Mammary epithelial cell (primary cell): ENCODE measurements at regions of chr14 and their contacts with region 1.

Region 1: GRCh38 chr14:80055667-80056496 is 155.4 kb downstream of the DIO2 start:
- DNase-seq: peak; percentile 32
- H3K4me3 ChIP-seq: no peak overlapping the region
- H3K27ac ChIP-seq: no peak overlapping the region
- H3K4me1 ChIP-seq: no peaks in the 10 kb centered on the region
- H3K27me3 ChIP-seq: no peaks in the 10 kb centered on the region
- CTCF ChIP-seq: peak; percentile 65 to 81

Region 2: DNA sequence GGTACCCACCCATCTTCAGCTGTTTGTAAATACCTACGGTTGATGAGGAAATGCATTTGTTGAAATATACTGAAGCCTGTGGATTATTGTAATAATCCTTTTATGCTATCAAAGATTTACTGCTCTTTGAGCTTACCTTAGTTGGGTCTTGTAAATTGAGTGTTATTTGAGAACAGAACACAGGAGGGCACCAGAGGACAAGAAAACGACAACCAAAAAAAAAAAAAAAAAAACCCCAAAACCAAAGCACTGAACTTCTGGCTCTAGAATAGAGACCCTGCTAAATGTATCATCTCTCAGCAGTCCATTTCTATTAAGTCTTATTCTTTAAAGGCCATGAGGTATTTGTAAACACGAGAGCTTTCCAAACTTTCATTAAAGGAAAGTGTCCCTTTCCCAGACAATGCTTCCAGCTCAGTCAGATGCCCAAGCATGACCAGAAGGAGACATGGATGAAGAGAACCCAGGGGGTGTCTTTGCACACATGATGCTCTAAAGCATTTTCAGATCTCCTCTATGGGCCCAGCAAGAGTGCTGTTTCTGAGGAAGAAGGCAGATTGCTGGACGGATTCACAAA is 1121.8 kb before region 1 on chr14:
- CTCF ChIA-PET with region 1: interaction called, 10 read pairs
- dilution Hi-C with region 1: no loop called
- in situ Hi-C with region 1: no loop called
- intact Hi-C with region 1: no loop called
- DNase-seq: peak; percentile 8
- H3K4me3 ChIP-seq: no peak overlapping the region
- H3K27ac ChIP-seq: no peak overlapping the region
- H3K4me1 ChIP-seq: no peaks in the 10 kb centered on the region
- H3K27me3 ChIP-seq: no peaks in the 10 kb centered on the region
- CTCF ChIP-seq: peak; percentile 25 to 51

Region 3: GRCh38 chr14:79011091-79011919 is 1044.6 kb before region 1 on chr14:
- CTCF ChIA-PET with region 1: no interaction called
- dilution Hi-C with region 1: no loop called
- in situ Hi-C with region 1: no loop called
- intact Hi-C with region 1: loop called (anchors 1 kb)
- DNase-seq: peak; percentile 89
- H3K4me3 ChIP-seq: no peak overlapping the region
- H3K27ac ChIP-seq: peak overlapping the region; percentile 78
- H3K4me1 ChIP-seq: peaks cover 12% of the 10 kb centered on the region
- H3K27me3 ChIP-seq: no peaks in the 10 kb centered on the region
- CTCF ChIP-seq: peak; percentile 22 to 48

Region 4: DNA sequence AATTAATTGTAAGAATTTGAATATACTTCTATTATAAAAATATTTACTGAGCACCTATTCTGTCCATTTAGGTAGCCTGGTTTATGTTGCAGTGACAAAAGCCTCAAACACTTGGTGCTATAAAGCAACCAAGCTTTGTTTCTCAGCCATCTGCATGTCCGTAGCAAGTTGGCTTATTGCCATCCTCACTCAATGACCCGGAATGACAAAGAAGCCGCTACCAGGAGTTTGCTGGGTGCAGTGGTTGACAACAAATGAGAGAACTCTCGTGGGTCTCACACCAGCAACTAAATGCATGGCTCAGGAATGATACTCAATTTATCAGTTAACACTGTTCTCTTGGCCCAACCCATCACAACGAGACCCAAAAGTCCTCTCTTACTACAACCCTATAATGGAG is 397.7 kb before region 1 on chr14:
- CTCF ChIA-PET with region 1: no interaction called
- dilution Hi-C with region 1: no loop called
- in situ Hi-C with region 1: no loop called
- intact Hi-C with region 1: no loop called
- DNase-seq: no peak
- H3K4me3 ChIP-seq: no peak overlapping the region
- H3K27ac ChIP-seq: no peak overlapping the region
- H3K4me1 ChIP-seq: no peaks in the 10 kb centered on the region
- H3K27me3 ChIP-seq: no peaks in the 10 kb centered on the region
- CTCF ChIP-seq: no peak

Region 5: DNA sequence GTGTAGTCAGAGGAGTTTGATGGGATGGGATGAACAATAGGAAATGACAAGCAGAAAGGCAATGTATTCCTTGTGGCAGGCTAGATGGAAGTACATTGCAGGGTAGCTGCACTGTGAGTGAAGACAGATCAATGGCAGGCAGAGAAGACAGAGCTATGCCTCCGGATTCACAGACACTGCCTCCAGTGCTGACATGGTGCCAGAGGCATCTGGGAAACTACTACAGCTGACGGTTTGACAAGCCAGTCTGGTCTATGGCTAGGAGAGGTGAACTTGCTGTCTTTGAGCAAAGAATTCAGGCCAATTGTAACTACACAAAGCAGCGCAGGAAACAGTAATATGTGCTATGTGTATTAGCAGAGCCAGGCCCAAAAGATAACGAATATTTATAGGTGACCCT is 38.1 kb before region 1 on chr14:
- CTCF ChIA-PET with region 1: no interaction called
- dilution Hi-C with region 1: no loop called
- in situ Hi-C with region 1: no loop called
- intact Hi-C with region 1: no loop called
- DNase-seq: no peak
- H3K4me3 ChIP-seq: no peak overlapping the region
- H3K27ac ChIP-seq: no peak overlapping the region
- H3K4me1 ChIP-seq: no peaks in the 10 kb centered on the region
- H3K27me3 ChIP-seq: no peaks in the 10 kb centered on the region
- CTCF ChIP-seq: no peak

Region 6: GRCh38 chr14:80124794-80125193 is 68.9 kb after region 1 on chr14:
- CTCF ChIA-PET with region 1: no interaction called
- dilution Hi-C with region 1: no loop called
- in situ Hi-C with region 1: no loop called
- intact Hi-C with region 1: no loop called
- DNase-seq: no peak
- H3K4me3 ChIP-seq: no peak overlapping the region
- H3K27ac ChIP-seq: no peak overlapping the region
- H3K4me1 ChIP-seq: no peaks in the 10 kb centered on the region
- H3K27me3 ChIP-seq: no peaks in the 10 kb centered on the region
- CTCF ChIP-seq: no peak

Region 7: DNA sequence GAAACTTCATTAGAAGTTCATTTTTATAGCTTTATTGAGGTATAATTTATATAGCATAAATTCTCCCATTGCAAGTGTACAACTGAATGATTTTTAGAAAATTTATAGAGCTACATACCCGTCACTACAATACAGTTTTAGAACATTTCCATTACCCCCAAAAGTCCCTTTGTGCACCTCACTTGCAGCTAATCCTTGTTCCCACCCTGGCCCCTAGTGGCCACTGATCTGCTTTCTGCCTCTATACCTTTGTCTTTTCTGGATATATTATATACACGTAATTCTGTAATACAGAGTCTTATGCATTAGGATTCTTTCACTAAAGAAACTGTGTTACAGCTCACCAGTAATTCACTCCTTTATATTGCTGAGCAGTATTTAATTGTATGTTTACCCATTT is 300.5 kb after region 1 on chr14:
- CTCF ChIA-PET with region 1: no interaction called
- dilution Hi-C with region 1: no loop called
- in situ Hi-C with region 1: loop called in 1 of 2 experiments (anchors 25 kb)
- intact Hi-C with region 1: loop called (anchors 2 kb)
- DNase-seq: no peak
- H3K4me3 ChIP-seq: no peak overlapping the region
- H3K27ac ChIP-seq: no peak overlapping the region
- H3K4me1 ChIP-seq: no peaks in the 10 kb centered on the region
- H3K27me3 ChIP-seq: no peaks in the 10 kb centered on the region
- CTCF ChIP-seq: peak; percentile 33 to 43

Region 8: GRCh38 chr14:80587075-80587724 is 531.3 kb after region 1 on chr14:
- CTCF ChIA-PET with region 1: interaction called, 6 read pairs
- dilution Hi-C with region 1: no loop called
- in situ Hi-C with region 1: loop called in 1 of 2 experiments (anchors 25 kb)
- intact Hi-C with region 1: loop called (anchors 1 kb)
- DNase-seq: peak; percentile 49
- H3K4me3 ChIP-seq: no peak overlapping the region
- H3K27ac ChIP-seq: no peak overlapping the region
- H3K4me1 ChIP-seq: peaks cover 14% of the 10 kb centered on the region
- H3K27me3 ChIP-seq: no peaks in the 10 kb centered on the region
- CTCF ChIP-seq: peak; percentile 72 to 79

Region 9: DNA sequence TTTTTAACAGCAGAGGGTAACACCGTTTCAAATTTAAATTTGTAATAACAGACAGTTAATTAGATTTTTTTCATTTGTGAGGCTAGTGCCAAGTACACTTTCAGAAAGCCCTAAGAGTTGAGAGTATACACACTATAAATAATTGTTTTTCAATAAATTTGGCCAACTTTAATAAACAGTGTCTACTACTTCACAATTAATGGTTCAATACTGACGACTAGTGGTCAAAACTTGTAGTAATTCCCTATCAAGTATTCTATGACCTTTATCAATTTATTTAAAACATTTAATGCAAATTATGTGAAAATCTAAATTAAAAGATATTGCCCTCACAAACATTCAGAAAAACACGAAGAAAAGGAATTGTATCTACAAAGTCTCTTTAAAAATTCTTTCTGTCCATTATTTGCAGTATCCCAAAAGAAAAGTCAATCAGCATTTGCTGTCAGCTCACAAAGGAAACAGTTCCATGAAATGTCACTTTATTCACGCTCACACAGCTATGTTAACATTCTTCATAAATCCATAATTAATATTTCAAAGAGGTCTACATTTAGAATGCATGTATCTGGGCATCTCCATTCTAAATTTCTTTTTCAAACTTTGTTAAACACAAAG is 794.4 kb after region 1 on chr14:
- CTCF ChIA-PET with region 1: interaction called, 4 read pairs
- dilution Hi-C with region 1: no loop called
- in situ Hi-C with region 1: loop called (anchors 25 kb)
- intact Hi-C with region 1: loop called (anchors 1 kb)
- DNase-seq: no peak
- H3K4me3 ChIP-seq: no peak overlapping the region
- H3K27ac ChIP-seq: no peak overlapping the region
- H3K4me1 ChIP-seq: no peaks in the 10 kb centered on the region
- H3K27me3 ChIP-seq: no peaks in the 10 kb centered on the region
- CTCF ChIP-seq: peak; percentile 43 to 52